Posterior vena cava (tissue), 2 donors: ENCODE measurements at regions of chr3 and their contacts with region 1.

Region 1: GRCh38 chr3:44685128-44685800 is 27.2 kb upstream of the ZNF502 start:
- DNase-seq: peak; percentile 92

Region 2: GRCh38 chr3:44661189-44661588 is 24.1 kb before region 1 on chr3:
- intact Hi-C with region 1: loop called in 1 of 2 experiments (anchors 1 kb)
- DNase-seq: no peak